Aorta (tissue), 5 donors: ENCODE measurements at regions of chr6 and their contacts with region 1.

Region 1: DNA sequence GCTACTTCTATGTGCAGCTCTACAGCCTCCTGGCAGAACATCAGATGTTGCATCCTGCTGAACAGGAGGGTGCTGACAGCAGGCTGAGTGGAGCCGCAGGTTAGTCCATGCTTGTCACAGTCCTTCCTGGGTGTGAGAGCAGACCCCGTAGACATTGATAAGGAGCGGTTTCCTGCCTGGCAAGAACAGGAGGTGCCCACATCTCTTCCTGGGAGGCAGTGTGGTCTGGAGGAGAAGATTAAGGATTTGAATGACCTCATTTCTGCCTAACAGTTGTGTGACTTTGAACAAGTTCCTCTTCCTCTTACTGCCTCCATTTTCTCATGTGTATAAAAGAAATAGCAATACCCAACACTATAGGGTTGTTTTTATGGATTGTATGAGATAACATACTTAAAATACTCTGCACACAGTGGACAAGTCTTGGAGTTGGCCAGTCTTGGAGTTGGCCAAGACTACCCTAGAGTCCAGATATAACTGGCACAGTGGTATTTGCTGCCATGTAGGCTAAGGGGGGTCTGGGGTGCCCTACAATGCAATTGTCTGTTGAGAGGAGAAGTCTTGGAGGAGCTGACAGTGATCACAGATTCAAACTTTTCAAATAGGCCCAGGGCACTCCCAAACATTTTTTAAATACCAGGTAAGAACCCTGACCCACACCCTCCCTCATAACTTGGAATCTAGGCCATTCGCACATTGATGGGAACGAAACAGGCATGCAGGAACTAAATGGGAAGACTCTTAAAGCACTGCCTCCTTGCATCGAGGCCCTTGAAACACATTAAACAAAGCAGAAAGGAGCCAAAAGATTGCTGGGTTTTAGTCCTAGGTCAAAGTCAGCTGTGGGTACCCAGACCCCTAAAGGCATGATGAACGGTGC is 32.6 kb upstream of the TBC1D7 start:
- DNase-seq: no peak
- ATAC-seq: no peak
- H3K4me3 ChIP-seq: no peak overlapping the region
- H3K27ac ChIP-seq: no peak overlapping the region
- H3K4me1 ChIP-seq: no peaks in the 10 kb centered on the region
- H3K27me3 ChIP-seq: no peaks in the 10 kb centered on the region

Region 2: DNA sequence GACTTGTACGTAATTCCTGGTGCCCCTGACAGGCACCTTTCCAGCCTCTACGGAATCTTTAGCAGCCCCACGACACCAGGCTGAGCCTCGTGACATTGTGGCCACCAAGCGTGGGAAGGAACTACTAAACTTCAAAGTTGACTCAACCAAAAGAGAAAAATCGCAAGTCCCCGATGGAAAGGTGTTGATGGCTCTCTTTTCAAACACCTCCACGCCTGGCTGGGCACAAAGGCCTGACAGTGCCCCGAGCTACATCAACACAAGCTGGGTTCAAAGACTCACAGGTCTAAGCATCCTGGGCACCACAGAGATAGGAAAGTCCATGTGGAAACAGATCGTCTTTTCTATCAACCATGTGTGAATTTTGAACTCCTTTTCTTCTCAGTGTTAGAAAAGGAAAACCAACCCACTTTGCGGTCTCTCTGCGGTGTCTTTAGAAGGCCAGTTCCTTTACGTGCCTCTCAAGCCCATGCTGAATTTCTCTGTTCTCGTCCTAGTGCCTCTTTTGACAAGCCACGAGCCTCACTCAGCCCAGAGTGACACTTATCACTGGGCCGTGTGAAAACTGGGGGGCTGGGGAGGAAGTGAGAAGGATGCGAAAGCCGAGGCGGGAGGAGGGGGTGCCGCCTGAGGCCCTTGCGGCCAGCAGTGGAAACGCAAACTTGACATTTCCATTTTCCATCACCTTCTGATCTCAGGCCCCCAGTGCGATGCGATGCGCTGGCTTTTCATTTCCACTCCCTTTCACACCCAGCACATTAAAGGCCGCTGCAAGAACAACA is 67.1 kb after region 1 on chr6:
- intact Hi-C with region 1: loop called in 1 of 2 experiments (anchors 10 kb)
- DNase-seq: peak in 1 of 2 donors; percentile 57
- ATAC-seq: no peak
- H3K4me3 ChIP-seq: no peak overlapping the region
- H3K27ac ChIP-seq: no peak overlapping the region
- H3K4me1 ChIP-seq: peaks cover 0 to 3% of the 10 kb centered on the region in 2 donors
- H3K27me3 ChIP-seq: no peaks in the 10 kb centered on the region

Region 3: DNA sequence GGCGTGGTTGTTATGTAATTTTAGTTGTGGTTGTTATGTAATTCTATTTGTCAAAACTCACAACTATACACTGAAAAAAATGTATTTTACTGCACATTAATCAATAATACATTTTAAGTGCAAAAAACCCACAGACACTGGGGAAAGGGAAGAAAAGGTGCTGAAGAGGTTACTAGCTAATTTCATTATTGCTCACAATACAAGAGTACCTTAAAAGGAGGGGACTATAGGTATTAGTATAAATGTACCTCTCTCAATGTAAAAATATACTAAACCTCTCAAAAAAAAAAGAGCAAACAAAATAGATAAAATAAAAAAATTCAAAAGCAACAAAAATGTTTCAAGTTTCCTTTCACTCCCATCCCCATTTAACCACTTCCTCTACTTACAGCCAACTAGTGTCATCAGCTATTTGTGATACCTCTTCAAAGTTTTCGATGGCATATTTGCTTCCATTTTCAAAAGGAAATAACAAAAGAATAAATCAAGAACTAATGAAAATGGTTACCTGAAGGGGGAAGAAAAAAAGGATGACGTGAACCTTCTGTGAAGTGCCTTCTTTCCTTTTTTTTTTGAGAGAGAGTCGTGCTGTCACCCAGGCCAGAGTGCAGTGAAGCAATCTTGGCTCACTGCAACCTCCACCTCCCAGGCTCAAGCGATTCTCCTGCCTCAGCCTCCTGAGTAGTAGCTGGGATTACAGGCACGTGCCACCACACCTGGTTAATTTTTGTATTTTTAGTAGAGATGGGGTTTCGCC is 320.6 kb after region 1 on chr6:
- intact Hi-C with region 1: no loop called
- DNase-seq: no peak
- ATAC-seq: no peak
- H3K4me3 ChIP-seq: no peak overlapping the region
- H3K27ac ChIP-seq: no peak overlapping the region
- H3K4me1 ChIP-seq: no peaks in the 10 kb centered on the region
- H3K27me3 ChIP-seq: no peaks in the 10 kb centered on the region